GM12878 (cell line): ENCODE measurements at regions of chr4 and their contacts with region 1.

Region 1: GRCh38 chr4:83440899-83441298 is 14.7 kb downstream of the HELQ start:
- DNase-seq: no peak
- ATAC-seq: peak; percentile 77
- H3K4me3 ChIP-seq: no peak overlapping the region
- H3K27ac ChIP-seq: no peak overlapping the region
- H3K4me1 ChIP-seq: no peaks in the 10 kb centered on the region
- H3K27me3 ChIP-seq: no peaks in the 10 kb centered on the region
- CTCF ChIP-seq: no peak
- EP300 ChIP-seq: no peak
- POLR2A ChIP-seq: no peak
- RAD21 ChIP-seq: no peak

Region 2: DNA sequence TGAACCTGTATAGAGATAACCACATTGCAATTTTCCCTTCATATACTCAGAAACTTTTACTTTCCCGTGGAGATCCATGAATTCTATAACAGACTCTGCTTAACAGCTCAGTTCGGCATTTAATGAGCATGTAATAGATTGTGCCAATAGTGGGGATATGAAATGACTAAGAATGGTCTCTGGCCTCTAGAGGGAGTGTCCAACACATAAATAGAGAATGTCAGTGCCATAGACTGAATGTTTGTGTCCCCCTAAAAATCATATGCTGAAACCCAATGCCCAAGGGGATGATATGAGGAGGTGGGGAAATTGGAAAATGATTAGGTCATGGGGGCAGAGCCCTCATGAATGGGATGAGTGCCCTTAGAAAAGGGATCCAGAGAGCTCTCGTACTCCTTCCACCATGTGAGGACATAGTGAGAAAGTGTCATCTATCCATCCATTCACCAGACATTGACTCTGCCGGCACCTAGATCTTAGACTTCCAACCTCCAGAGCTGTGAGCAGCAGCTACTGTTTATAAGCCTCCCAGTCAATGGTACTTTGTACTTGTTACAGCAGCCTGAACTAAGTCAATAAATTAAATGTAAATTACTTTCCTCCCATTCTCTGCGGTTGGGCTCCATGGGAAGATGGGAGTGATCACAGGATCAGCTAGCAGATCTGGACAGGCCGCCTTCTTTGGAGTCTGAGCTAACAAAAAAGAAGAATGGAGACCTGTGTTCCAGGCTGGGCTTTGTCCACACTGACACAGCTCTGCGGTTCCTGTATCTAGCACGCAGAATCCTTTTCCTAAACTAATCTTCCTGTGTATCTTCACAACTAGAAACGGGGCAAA is 78.2 kb before region 1 on chr4:
- CTCF ChIA-PET with region 1: no interaction called
- POLR2A ChIA-PET with region 1: no interaction called
- RAD21 ChIA-PET with region 1: no interaction called
- SMC1A ChIA-PET with region 1: no interaction called
- in situ Hi-C with region 1: no loop called
- intact Hi-C with region 1: loop called (anchors 5 kb)
- DNase-seq: no peak
- ATAC-seq: peak; percentile 88
- H3K4me3 ChIP-seq: no peak overlapping the region
- H3K27ac ChIP-seq: no peak overlapping the region
- H3K4me1 ChIP-seq: no peaks in the 10 kb centered on the region
- H3K27me3 ChIP-seq: no peaks in the 10 kb centered on the region
- CTCF ChIP-seq: peak; percentile 29 to 46 (median 39); a peak in 5 of 6 replicates
- EP300 ChIP-seq: no peak
- POLR2A ChIP-seq: no peak
- RAD21 ChIP-seq: peak; percentile 43; the same call in 1 of the 2 replicates

Region 3: DNA sequence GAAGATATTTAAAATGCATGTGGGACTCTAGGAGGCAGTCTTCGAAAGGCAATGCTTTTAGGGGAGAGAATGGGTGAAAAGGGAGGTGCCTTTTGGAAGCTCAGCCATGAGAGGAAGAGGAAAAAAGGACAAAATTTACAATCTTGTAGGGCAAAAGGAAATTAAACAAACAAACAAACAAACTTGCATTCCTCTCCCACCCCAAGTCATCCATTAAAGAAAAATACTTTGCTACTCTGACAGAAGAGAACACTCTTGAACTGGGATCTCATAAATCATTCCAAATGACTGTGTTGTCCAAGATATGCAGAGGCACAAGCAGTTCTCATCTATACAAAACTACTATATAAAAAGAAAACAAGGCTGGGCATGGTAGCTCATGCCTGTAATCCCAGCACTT is 32.0 kb before region 1 on chr4:
- CTCF ChIA-PET with region 1: no interaction called
- POLR2A ChIA-PET with region 1: no interaction called
- RAD21 ChIA-PET with region 1: no interaction called
- SMC1A ChIA-PET with region 1: no interaction called
- in situ Hi-C with region 1: no loop called
- intact Hi-C with region 1: no loop called
- DNase-seq: no peak
- ATAC-seq: no peak
- H3K4me3 ChIP-seq: no peak overlapping the region
- H3K27ac ChIP-seq: no peak overlapping the region
- H3K4me1 ChIP-seq: no peaks in the 10 kb centered on the region
- H3K27me3 ChIP-seq: no peaks in the 10 kb centered on the region
- CTCF ChIP-seq: 0 out of 6 replicates have a peak, but pooled peaks of 1 of the 3 experiments have one; percentile 1
- EP300 ChIP-seq: no peak
- POLR2A ChIP-seq: no peak
- RAD21 ChIP-seq: no peak